ENCODE measurements at regions of chr11 and their contacts with region 1.

Region 1: GRCh38 chr11:110362971-110363509 is 66.6 kb upstream of the RDX start:
- DNase-seq: no peak
- ATAC-seq: no peak

Region 2: DNA sequence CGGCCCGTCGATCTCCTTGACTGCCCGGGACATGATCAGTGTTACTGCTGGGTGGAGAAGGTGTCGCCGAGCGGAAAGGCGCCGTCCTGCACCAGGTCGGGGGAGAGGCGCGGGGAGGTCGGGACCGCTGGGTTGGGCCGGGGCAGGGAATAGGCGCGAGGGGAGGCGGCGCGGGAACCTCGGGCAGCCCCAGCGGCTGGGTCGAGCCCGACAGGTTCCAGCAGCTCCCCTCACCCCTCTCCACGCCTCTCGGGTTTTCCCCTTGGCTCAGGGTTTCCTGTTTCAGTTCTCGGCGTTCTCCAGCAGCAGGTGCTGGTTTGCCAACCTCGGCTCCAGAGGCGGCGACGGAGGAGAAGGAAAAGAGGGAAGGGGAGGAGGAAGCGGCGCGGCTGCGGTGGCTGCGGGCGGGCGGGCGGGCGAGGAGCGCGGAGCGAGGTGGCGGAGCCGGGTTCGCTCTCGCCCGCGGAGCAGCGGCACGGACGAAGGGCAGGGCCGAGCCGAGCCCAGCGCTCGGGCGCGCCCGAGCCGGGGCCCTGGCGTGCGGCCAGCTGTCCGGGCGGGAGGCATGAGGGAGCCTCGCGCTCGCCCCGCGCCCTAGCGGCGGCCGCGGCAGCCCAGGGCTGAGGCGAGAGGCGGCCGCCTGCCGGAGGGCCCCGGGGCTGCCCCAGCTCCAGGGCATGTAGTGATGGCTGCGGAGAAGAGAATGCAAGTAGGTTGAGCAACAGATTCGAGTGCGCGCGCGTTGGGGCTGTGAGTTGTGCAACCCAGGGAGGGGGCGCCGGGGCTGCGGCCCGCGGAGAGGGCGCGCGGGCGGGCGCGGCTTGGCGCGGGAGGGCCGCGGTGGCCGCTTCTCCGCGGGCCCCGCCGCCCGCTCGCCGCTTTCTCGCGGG is 270.3 kb before region 1 on chr11 and contains the start of gene ZC3H12C:
- intact Hi-C with region 1: loop called (anchors 10 kb)
- DNase-seq: peak; percentile 88
- ATAC-seq: peak; percentile 90
- total RNA-seq, gene ZC3H12C: 18.0 TPM